ENCODE measurements at regions of chr12 and their contacts with region 1.

Region 1: DNA sequence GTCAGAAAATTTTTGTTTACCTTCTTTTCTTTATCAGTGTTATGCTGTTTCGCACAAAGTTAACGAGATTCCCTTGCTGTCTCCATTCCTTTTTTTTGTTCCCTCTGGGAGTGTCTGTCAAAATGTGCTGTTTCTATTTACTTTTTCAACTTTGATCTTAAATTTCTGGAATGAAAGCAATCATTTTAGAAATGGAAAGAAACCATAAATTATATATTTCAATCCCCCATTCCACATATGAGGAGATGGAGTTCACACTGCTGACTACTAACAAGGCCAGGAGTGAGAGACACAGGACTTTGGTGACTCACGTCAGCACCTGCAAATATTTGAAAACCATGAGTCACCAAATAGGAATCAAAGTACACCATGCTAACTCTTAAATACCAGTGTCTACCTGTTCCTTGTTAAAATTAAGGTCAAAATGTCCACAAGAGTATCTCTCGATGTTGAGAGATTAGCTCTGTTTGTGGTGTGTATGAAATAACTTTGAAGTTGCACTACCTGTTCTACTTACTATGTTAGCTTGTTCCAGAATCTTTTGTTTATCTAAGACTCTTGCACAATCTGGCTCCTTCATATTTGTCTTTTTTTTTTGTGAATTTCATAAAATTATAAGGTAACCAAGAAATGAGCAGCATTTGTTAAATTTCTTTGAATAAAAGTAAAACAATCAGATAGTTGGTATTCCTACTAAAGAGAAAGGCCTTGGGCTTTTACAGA is 106.0 kb downstream of the RMST start:
- DNase-seq: peak; percentile 59 to 66
- H3K4me3 ChIP-seq: no peak overlapping the region
- H3K27ac ChIP-seq: peak overlapping the region; percentile 80 to 98 (median 92)
- H3K4me1 ChIP-seq: peaks cover 24 to 62% of the 10 kb centered on the region in 2 donors
- H3K27me3 ChIP-seq: no peaks in the 10 kb centered on the region
- CTCF ChIP-seq: peak in 1 of 6 experiments; percentile 10
- POLR2A ChIP-seq: peak in 1 of 2 donors; percentile 68

Region 2: GRCh38 chr12:97474161-97474560 is 94.5 kb before region 1 on chr12:
- intact Hi-C with region 1: loop called (anchors 10 kb)
- DNase-seq: peak; percentile 30 to 51
- H3K4me3 ChIP-seq: peak overlapping the region in 1 of 3 donors; percentile 0
- H3K27ac ChIP-seq: peak overlapping the region; percentile 94 to 99 (median 99)
- H3K4me1 ChIP-seq: peaks cover 39 to 69% of the 10 kb centered on the region in 2 donors
- H3K27me3 ChIP-seq: no peaks in the 10 kb centered on the region
- CTCF ChIP-seq: no peak
- POLR2A ChIP-seq: peak in 1 of 2 donors; percentile 41

Region 3: DNA sequence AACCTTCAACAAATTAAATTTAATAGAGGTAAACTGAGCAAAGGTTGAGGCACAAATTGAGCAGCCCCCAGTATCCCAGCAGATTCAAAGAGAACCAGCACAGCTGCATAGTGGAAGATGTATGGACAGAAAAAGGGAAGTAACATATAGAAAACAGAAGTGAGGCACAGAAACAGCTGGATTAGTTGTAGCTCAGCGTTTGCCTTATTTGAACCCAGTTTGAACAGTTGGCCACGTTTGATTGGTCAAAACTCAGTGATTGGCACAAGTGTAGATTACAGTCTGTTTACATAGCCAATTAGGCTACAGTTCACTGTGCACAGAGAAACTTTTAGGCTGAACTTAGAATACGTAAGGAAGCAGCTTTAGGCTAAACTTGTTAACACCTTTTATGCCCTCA is 209.5 kb after region 1 on chr12:
- intact Hi-C with region 1: no loop called
- DNase-seq: no peak
- H3K4me3 ChIP-seq: no peak overlapping the region
- H3K27ac ChIP-seq: no peak overlapping the region
- H3K4me1 ChIP-seq: no peaks in the 10 kb centered on the region
- H3K27me3 ChIP-seq: no peaks in the 10 kb centered on the region
- CTCF ChIP-seq: no peak
- POLR2A ChIP-seq: no peak

Region 4: DNA sequence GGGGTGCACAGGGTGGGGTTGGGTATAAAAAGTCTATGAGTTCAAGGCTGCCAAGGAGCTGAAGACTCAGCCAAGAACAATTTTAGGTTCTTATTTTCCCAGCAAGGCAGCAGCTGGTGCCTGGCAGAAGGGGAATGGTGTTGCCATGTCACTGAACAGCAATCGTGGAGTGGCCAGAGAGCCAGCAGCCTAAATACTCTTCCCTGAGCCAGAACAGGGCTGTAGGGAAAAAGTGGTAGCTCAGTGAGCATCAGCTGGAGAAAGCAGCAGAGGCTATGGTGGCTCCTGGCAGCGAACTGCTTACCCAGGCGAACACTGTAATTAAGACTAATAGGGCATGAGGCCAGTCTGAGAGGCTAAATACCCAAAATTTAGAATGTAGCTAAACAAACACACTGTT is 228.9 kb after region 1 on chr12:
- intact Hi-C with region 1: no loop called
- DNase-seq: no peak
- H3K4me3 ChIP-seq: no peak overlapping the region
- H3K27ac ChIP-seq: no peak overlapping the region
- H3K4me1 ChIP-seq: no peaks in the 10 kb centered on the region
- H3K27me3 ChIP-seq: no peaks in the 10 kb centered on the region
- CTCF ChIP-seq: no peak
- POLR2A ChIP-seq: no peak

Region 5: GRCh38 chr12:97875064-97875463 is 306.4 kb after region 1 on chr12:
- intact Hi-C with region 1: no loop called
- DNase-seq: no peak
- H3K4me3 ChIP-seq: no peak overlapping the region
- H3K27ac ChIP-seq: no peak overlapping the region
- H3K4me1 ChIP-seq: no peaks in the 10 kb centered on the region
- H3K27me3 ChIP-seq: no peaks in the 10 kb centered on the region
- CTCF ChIP-seq: no peak
- POLR2A ChIP-seq: no peak

Measured in thyroid gland (tissue), 4 donors.